Activated T-helper 1 cell treated with anti-CD3 and anti-CD28 coated beads, Interleukin-12 subunit alpha, Interleukin-12 subunit beta, Interleukin-2, Interleukin-4 antibody, amounts not matched to agents 30 ng/mL and 10 ng/mL and 1 ng/mL, durations not matched to agents 14 hours and 24 hours and 36 hours (primary cell): ENCODE measurements at regions of chr3 and their contacts with region 1.

Region 1: DNA sequence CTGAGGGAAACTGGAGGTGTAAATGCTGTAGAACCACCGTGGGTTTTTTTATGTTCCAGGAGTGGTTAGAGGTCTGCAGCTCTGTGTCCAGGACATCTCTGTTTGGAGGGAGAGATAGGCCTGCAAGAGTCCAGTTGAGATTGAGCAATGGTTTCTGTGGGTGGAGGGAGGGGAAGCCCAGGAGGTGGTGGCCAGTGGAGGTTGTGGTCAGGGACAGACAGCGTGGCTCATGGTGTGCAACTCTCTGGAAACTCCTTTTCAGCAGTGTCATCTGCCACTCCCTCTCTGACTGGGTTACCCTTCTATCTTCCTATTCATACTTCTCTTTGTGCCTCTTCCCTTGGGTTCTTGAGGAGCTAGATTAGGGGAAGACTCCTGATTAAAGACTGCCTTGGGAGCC is 9.6 kb downstream of the XCR1 start:
- DNase-seq: no peak
- H3K4me3 Mint-ChIP-seq: peak overlapping the region; percentile 21
- H3K27ac Mint-ChIP-seq: peak overlapping the region; percentile 80
- H3K4me1 Mint-ChIP-seq: peaks cover 58% of the 10 kb centered on the region
- H3K27me3 Mint-ChIP-seq: peaks cover 4% of the 10 kb centered on the region

Region 2: DNA sequence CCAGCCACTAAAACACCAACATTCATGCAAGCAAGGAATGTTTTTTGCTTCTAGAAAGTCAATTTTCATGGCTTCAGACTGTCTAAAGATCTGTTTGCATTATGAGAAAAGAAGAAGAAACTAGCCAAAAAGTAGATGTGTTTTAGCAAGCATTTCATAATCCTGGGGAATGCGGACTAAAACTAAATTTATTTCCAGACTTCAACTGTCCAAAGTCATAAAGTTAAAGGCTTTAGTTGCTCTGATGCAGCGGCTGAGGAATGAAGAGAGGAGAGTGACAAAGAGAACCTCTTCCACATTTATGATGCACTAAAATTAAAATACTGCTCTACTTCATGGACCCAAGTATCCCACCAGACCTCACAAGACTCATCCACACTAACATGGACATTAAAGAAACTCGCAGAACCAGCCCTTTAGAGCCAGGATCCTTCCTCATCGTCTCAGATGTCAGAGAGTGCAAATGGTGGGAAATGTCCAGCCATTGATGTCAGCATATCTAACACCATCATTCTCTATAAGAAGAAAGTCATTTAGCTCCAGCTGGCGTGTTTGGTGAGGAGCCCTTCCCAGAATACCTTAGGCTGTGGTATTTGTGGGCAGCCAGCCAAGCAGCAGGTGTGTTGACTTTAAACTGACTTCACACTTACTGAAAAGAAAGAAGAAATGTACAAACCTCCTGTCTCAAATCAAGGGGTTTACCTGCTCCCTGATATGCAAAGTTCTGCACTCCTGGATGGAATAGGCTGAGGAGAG is 39.5 kb before region 1 on chr3:
- intact Hi-C with region 1: loop called (anchors 1 kb)
- DNase-seq: peak; percentile 72
- H3K4me3 Mint-ChIP-seq: peak overlapping the region; percentile 86
- H3K27ac Mint-ChIP-seq: peak overlapping the region; percentile 98
- H3K4me1 Mint-ChIP-seq: peaks cover 89% of the 10 kb centered on the region
- H3K27me3 Mint-ChIP-seq: no peaks in the 10 kb centered on the region

Region 3: DNA sequence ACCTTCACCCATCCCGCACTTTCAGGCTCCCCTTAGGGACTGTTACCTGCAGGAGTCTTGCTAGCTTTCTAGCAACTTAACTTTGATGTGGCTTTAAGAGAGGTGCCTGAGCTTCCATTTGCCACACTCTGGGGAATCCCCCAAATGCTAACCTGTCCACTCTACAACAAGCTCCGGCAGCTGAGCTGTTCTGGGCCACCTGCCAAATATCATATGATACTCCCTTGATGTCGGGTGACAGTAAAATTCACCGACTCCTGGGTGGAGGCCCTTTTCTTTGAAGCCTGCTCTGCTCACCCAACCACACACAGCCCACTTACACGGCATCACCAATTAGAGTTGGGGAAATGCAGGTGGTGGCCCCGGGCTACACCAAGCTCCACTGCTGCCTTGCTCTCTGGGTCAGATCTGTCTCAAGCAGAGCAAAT is 47.6 kb after region 1 on chr3:
- intact Hi-C with region 1: loop called (anchors 1 kb)
- DNase-seq: peak; percentile 64
- H3K4me3 Mint-ChIP-seq: peak overlapping the region; percentile 63
- H3K27ac Mint-ChIP-seq: peak overlapping the region; percentile 59
- H3K4me1 Mint-ChIP-seq: peaks cover 54% of the 10 kb centered on the region
- H3K27me3 Mint-ChIP-seq: peaks cover 41% of the 10 kb centered on the region

Region 4: GRCh38 chr3:46070595-46071093 is 52.9 kb after region 1 on chr3:
- intact Hi-C with region 1: loop called (anchors 1 kb)
- DNase-seq: no peak
- H3K4me3 Mint-ChIP-seq: peak overlapping the region; percentile 53
- H3K27ac Mint-ChIP-seq: peak overlapping the region; percentile 96
- H3K4me1 Mint-ChIP-seq: peaks cover 70% of the 10 kb centered on the region
- H3K27me3 Mint-ChIP-seq: peaks cover 12% of the 10 kb centered on the region

Region 5: GRCh38 chr3:46558184-46559043 is 540.7 kb after region 1 on chr3:
- intact Hi-C with region 1: loop called (anchors 5 kb)
- DNase-seq: peak; percentile 57
- H3K4me3 Mint-ChIP-seq: peak overlapping the region; percentile 82
- H3K27ac Mint-ChIP-seq: no peak overlapping the region
- H3K4me1 Mint-ChIP-seq: peaks cover 13% of the 10 kb centered on the region
- H3K27me3 Mint-ChIP-seq: peaks cover 44% of the 10 kb centered on the region